Posterior cingulate gyrus (tissue), 11 donors: ENCODE measurements at regions of chr3 and their contacts with region 1.

Region 1: DNA sequence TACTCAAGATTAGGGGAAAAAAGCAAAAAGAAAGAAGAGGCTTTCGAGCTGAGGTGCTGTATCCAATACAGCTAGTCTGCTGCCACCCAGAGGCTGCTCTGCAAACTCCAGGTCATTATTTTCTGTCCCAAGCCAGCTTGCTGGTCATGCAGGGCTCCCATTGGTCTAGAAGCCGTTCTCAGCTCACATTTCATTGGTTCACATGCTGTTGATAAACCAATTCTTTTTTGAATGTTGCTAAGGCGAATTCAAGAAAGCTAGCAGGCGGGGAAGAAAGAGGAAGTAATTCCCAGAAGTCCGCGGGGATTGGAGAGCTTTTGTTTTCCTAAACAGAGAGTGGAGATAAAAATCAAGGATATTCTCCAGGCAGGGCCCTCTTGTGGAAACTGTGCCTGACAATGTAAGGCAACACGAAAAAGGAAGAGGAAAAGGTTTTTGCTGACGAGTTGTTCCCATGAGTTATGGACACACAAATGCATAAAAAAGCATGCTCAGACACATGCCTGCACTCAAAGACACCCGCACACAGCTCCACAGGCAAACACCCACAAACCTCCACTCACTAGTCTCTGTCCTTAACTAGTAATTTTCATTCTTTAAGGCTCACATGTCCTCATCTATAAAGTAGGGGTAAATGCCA is 33.4 kb downstream of the FSTL1 start:
- DNase-seq: peak; percentile 85 to 98 (median 93)

Region 2: GRCh38 chr3:119891944-119892721 is 525.3 kb before region 1 on chr3:
- intact Hi-C with region 1: loop called (anchors 5 kb)
- DNase-seq: peak in 3 of 10 donors; percentile 10 to 40 (median 13)

Region 3: GRCh38 chr3:120245386-120245785 is 172.0 kb before region 1 on chr3:
- intact Hi-C with region 1: loop called (anchors 1 kb)
- DNase-seq: no peak

Region 4: DNA sequence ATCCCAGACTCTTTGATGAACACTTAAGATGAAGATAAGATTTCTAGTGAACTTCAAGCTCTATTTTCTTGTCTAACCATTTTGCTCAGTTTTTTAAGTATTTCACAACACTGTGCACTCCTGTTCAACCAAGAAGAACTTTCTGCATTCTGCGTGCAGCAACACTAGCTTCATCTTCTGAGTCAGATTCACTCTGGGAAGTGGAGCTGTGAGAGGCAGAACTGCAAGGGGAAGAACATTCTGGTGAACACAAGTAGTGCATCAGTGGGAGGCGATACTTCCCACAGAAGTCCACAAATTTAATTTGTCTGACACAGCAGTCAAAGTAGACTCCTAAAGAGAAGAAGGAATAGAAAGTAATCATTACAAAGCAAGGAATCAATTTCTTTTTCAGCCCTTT is 86.3 kb before region 1 on chr3:
- intact Hi-C with region 1: no loop called
- DNase-seq: no peak

Region 5: GRCh38 chr3:120348981-120349818 is 68.2 kb before region 1 on chr3 and contains the start of gene LRRC58:
- intact Hi-C with region 1: loop called (anchors 1 kb)
- DNase-seq: peak; percentile 72 to 98 (median 84)

Region 6: GRCh38 chr3:120469447-120469846 is 52.1 kb after region 1 on chr3:
- intact Hi-C with region 1: no loop called
- DNase-seq: no peak

Region 7: GRCh38 chr3:120506828-120507774 is 89.7 kb after region 1 on chr3:
- intact Hi-C with region 1: loop called (anchors 5 kb)
- DNase-seq: peak in 1 of 10 donors; percentile 14

Region 8: DNA sequence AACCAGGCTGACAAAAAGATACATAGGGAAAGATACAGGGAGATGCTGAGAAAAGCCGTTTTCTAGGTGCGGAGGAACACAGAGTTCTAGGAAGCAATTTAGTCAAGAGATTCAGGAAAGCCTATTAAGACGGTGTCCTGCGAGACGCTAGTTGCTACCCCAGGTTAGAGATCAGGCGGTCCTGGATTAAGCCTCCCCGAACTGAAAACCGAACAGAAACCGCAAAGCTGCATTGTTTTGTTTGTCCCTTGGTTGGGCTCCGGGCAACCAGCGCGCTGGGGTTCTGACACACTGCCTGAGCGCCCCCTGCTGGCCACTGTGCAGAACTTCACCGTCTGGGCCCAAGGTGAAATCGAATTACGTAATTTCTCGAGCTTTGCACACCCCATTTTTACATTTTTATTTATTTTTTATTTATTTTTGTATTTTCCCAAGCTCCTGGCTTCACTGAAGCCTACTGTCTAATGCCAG is 141.4 kb after region 1 on chr3:
- intact Hi-C with region 1: loop called (anchors 2 kb)
- DNase-seq: peak; percentile 72 to 97 (median 86)